CD4-positive, alpha-beta T cell (primary cell): ENCODE measurements at regions of chr13 and their contacts with region 1.

Region 1: GRCh38 chr13:46295491-46296114 is 83.9 kb downstream of the LRRC63 start:
- DNase-seq: peak; percentile 45 to 92 (median 58)
- ATAC-seq: peak; percentile 84
- H3K4me3 ChIP-seq: peak overlapping the region; percentile 11
- H3K4me3 Mint-ChIP-seq: peak overlapping the region; percentile 38
- H3K27ac ChIP-seq: peak overlapping the region; percentile 85 to 89
- H3K27ac Mint-ChIP-seq: peak overlapping the region; percentile 94
- H3K4me1 ChIP-seq: peaks cover 41% of the 10 kb centered on the region
- H3K4me1 Mint-ChIP-seq: peaks cover 58% of the 10 kb centered on the region
- H3K27me3 ChIP-seq: no peaks in the 10 kb centered on the region
- H3K27me3 Mint-ChIP-seq: no peaks in the 10 kb centered on the region
- CTCF ChIP-seq: no peak

Region 2: GRCh38 chr13:45592758-45593157 is 702.8 kb before region 1 on chr13:
- CTCF ChIA-PET with region 1: no interaction called
- POLR2A ChIA-PET with region 1: no interaction called
- intact Hi-C with region 1: no loop called
- DNase-seq: no peak
- ATAC-seq: no peak
- H3K4me3 ChIP-seq: no peak overlapping the region
- H3K4me3 Mint-ChIP-seq: no peak overlapping the region
- H3K27ac ChIP-seq: no peak overlapping the region
- H3K27ac Mint-ChIP-seq: no peak overlapping the region
- H3K4me1 ChIP-seq: no peaks in the 10 kb centered on the region
- H3K4me1 Mint-ChIP-seq: no peaks in the 10 kb centered on the region
- H3K27me3 ChIP-seq: no peaks in the 10 kb centered on the region
- H3K27me3 Mint-ChIP-seq: peaks cover 10% of the 10 kb centered on the region
- CTCF ChIP-seq: no peak

Region 3: DNA sequence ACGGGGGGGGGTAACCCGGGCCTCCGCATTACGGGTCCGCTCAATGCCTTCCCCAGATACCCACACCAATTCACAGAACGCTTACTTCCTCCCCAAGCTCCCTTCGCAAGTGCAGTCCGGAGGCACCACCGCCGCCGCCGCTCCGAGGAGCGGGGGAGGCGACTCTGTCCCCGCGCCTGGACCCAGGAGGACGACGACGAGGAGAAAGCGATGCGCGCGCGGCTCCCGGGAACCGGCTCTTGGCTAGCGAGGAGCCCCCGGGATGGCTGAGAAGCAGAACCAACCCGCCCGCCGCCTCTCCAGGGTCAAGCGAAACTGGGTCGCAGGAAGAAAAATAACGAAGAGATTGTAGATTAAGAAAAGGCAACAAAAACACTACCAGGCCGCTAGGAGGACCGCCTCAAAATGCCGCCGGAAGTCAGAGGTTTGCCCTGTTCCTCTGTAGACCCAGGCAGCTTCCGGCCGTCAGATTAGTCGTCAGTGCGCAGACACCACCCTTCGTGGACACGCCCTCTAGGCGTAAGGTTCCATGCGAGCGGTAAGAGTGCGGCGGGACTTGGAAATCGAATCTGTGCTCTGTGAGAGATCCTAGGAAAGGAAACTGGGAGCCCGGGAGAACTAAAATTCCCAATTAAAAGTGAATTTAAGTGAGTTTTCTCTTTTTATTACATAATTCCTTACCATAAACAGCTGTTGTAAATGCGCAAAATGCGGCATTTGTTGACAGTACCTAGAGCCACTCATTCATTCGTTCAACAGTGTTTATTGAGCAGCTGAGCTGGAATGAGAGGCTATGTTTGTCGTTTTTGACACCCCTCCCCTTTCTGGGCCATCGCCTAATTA is 243.1 kb before region 1 on chr13 and contains the start of gene ZC3H13:
- CTCF ChIA-PET with region 1: no interaction called
- POLR2A ChIA-PET with region 1: interaction called, 13 read pairs
- intact Hi-C with region 1: loop called (anchors 5 to 10 kb)
- DNase-seq: peak; percentile 87 to 98 (median 89)
- ATAC-seq: peak; percentile 96
- H3K4me3 ChIP-seq: peak within 1 kb of the TSS; percentile 84
- H3K4me3 Mint-ChIP-seq: peak within 1 kb of the TSS; percentile 91
- H3K27ac ChIP-seq: peak within 1 kb of the TSS; percentile 97
- H3K27ac Mint-ChIP-seq: peak within 1 kb of the TSS; percentile 86
- H3K4me1 ChIP-seq: peaks cover 2% of the 10 kb centered on the region
- H3K4me1 Mint-ChIP-seq: peaks cover 53% of the 10 kb centered on the region
- H3K27me3 ChIP-seq: peaks cover 0 to 10% of the 10 kb centered on the region in 2 experiments
- H3K27me3 Mint-ChIP-seq: peaks cover 22% of the 10 kb centered on the region
- CTCF ChIP-seq: peak; percentile 48
- total RNA-seq, gene ZC3H13: 36.5 to 43.8 TPM

Region 4: DNA sequence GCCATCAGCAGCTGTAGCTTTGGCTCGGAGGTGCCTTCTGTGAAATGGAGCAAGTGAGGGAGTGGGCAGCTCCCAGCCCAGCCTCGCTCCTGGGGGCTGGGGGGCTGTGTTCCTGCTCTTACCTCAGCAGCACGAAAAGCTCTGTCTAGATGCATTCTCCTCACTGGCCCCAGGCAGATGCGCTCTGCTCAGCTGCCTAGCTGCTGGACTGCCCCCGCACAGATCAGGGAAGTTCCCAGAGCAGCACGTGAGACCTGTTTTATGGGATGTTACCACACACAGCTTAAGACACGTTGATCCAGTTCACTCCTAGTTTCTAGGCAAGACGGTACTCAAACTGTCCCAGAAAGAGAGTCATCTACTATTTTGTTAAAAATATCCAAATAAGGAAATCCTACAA is 127.3 kb before region 1 on chr13:
- CTCF ChIA-PET with region 1: interaction called, 3 read pairs
- POLR2A ChIA-PET with region 1: interaction called, 47 read pairs
- intact Hi-C with region 1: no loop called
- DNase-seq: peak in 5 of 14 experiments; percentile 37 to 87 (median 57)
- ATAC-seq: peak; percentile 19
- H3K4me3 ChIP-seq: peak overlapping the region; percentile 4
- H3K4me3 Mint-ChIP-seq: peak overlapping the region; percentile 83
- H3K27ac ChIP-seq: peak overlapping the region; percentile 68 to 73
- H3K27ac Mint-ChIP-seq: peak overlapping the region; percentile 98
- H3K4me1 ChIP-seq: peaks cover 83% of the 10 kb centered on the region
- H3K4me1 Mint-ChIP-seq: peaks cover 94% of the 10 kb centered on the region
- H3K27me3 ChIP-seq: no peaks in the 10 kb centered on the region
- H3K27me3 Mint-ChIP-seq: no peaks in the 10 kb centered on the region
- CTCF ChIP-seq: no peak

Region 5: DNA sequence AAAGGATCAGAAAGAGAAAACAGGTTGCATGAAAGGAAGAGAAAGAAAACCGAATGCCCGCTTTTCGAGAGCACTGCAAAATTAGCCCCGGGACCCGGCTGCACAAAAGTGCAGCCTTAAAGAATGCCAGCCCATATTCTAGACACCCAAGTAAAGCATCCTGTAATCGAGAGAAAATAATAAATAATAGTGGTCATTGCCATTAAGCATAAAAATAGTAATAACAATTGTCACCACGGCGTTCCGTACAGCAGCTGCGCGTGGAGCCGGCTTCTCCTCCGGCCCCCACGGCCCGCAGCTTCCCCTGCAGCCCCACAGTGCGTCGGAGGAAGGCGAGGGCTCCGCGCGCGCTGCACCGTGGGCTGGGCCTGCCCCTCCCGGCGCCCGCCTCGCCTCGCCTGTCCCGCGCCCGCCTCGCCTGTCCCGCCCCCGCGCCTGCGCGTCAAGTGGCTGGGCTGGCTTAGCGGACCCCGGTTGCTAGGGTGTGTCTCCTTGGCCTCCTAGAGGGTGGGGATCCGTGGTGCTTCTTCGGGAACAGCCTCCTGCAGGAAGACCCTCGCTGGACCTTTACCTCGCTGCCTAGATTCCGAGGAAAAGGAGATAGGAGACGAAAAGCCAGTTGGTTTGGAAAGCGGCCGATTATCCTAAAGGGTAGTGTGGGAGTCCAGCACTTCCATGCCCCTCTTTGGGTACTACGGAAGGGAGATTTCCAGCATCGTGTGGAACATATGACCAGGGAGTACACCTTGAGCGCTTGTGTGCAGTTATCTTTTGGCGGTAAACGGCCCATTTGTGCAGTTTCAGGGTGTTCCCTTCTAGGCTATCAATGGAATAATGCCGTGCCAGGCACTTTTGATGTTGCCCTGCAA is 83.9 kb before region 1 on chr13 and contains the start of gene LRRC63:
- CTCF ChIA-PET with region 1: no interaction called
- POLR2A ChIA-PET with region 1: interaction called, 12 read pairs
- intact Hi-C with region 1: loop called (anchors 1 to 5 kb)
- DNase-seq: peak; percentile 63 to 92 (median 80)
- ATAC-seq: peak; percentile 91
- H3K4me3 ChIP-seq: peak within 1 kb of the TSS; percentile 61
- H3K4me3 Mint-ChIP-seq: peak within 1 kb of the TSS; percentile 90
- H3K27ac ChIP-seq: peak within 1 kb of the TSS; percentile 54 to 78
- H3K27ac Mint-ChIP-seq: peak within 1 kb of the TSS; percentile 88
- H3K4me1 ChIP-seq: peaks cover 6% of the 10 kb centered on the region
- H3K4me1 Mint-ChIP-seq: peaks cover 22% of the 10 kb centered on the region
- H3K27me3 ChIP-seq: no peaks in the 10 kb centered on the region
- H3K27me3 Mint-ChIP-seq: no peaks in the 10 kb centered on the region
- CTCF ChIP-seq: no peak
- total RNA-seq, gene LRRC63: 0.17 TPM in 1 of 2 experiments, not detected in the other

Region 6: DNA sequence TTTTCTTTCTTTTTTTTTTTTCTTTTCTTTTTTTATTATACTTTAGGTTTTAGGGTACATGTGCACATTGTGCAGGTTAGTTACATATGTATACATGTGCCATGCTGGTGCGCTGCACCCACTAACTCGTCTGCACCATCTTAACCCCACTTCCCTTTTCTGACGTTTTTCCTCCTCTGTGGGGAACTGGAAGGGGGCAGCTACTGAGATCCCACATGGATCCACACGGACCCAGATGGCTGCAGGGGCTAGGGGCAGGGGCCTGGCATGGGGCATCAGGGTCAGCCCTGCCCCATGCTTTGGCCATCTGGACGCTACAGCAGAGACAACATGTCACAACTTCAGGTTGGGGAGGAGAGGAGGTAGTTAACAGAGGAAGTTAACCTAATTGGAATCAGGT is 37.2 kb after region 1 on chr13:
- CTCF ChIA-PET with region 1: no interaction called
- POLR2A ChIA-PET with region 1: interaction called, 13 read pairs
- intact Hi-C with region 1: no loop called
- DNase-seq: no peak
- ATAC-seq: no peak
- H3K4me3 ChIP-seq: no peak overlapping the region
- H3K4me3 Mint-ChIP-seq: no peak overlapping the region
- H3K27ac ChIP-seq: no peak overlapping the region
- H3K27ac Mint-ChIP-seq: peak overlapping the region; percentile 25
- H3K4me1 ChIP-seq: peaks cover 16% of the 10 kb centered on the region
- H3K4me1 Mint-ChIP-seq: peaks cover 26% of the 10 kb centered on the region
- H3K27me3 ChIP-seq: no peaks in the 10 kb centered on the region
- H3K27me3 Mint-ChIP-seq: no peaks in the 10 kb centered on the region
- CTCF ChIP-seq: no peak